Activated B cell treated with CpG ODN at 0.5 μM for 24 hours (primary cell): ENCODE measurements at regions of chr15 and their contacts with region 1.

Region 1: GRCh38 chr15:100918034-100918689 is 995 bp upstream of the LRRK1 start:
- DNase-seq: peak; percentile 81
- ATAC-seq: peak; percentile 79
- H3K4me3 Mint-ChIP-seq: peak overlapping the region; percentile 89
- H3K27ac Mint-ChIP-seq: peak overlapping the region; percentile 81
- H3K4me1 Mint-ChIP-seq: peaks cover 44% of the 10 kb centered on the region
- H3K27me3 Mint-ChIP-seq: no peaks in the 10 kb centered on the region
- CTCF ChIP-seq: peak; percentile 57

Region 2: GRCh38 chr15:100627789-100628395 is 290.3 kb before region 1 on chr15:
- CTCF ChIA-PET with region 1: interaction called, 3 read pairs
- POLR2A ChIA-PET with region 1: no interaction called
- intact Hi-C with region 1: loop called (anchors 1 kb)
- DNase-seq: no peak
- ATAC-seq: peak; percentile 79
- H3K4me3 Mint-ChIP-seq: no peak overlapping the region
- H3K27ac Mint-ChIP-seq: no peak overlapping the region
- H3K4me1 Mint-ChIP-seq: peaks cover 4% of the 10 kb centered on the region
- H3K27me3 Mint-ChIP-seq: no peaks in the 10 kb centered on the region
- CTCF ChIP-seq: peak; percentile 84

Region 3: DNA sequence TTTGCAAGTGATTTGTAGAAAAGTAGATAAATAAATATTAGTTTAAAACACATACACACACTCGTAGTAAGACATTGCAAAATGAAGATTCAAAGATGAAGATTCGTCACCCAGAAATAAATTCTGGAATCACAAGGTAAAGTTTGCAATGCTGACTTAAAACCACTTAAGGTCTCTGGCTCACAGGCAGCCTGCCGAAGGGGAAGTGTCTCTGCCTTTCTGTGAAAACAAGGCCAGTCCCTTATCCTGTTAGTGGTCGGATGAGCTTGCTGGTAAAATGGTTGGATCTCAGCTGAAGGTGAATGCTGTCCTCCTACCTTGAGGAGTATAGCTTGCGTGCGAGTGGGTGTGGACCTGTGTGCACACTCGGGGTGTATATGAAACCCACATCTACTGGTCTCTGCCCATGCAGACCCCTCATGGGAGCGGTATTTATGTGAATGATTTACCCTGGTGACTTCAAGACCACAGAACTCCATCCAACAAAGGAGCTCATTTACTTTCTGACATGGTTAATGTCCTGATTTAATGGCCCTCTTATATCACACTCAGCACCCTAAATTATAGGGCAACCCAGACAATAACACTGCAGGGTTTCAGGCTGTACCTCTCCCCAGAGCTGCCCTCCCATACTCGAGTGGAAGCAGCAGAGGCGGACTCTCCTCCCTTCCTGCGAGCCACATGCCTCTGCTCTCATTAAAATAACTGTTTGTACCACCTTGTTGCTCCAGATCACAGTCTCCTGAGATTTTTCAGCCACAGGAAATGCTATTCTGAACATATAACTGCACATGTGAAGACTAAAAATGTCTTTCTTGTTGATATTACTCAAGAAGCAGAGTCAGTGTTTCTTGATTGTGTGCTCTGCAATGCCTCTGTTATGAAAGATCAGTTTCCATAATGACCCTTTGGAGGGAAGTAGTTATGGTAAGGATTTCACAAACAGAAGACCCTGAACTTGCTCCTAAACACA is 84.5 kb before region 1 on chr15:
- CTCF ChIA-PET with region 1: no interaction called
- POLR2A ChIA-PET with region 1: no interaction called
- intact Hi-C with region 1: no loop called
- DNase-seq: no peak
- ATAC-seq: no peak
- H3K4me3 Mint-ChIP-seq: no peak overlapping the region
- H3K27ac Mint-ChIP-seq: no peak overlapping the region
- H3K4me1 Mint-ChIP-seq: no peaks in the 10 kb centered on the region
- H3K27me3 Mint-ChIP-seq: peaks cover 4% of the 10 kb centered on the region
- CTCF ChIP-seq: no peak

Region 4: DNA sequence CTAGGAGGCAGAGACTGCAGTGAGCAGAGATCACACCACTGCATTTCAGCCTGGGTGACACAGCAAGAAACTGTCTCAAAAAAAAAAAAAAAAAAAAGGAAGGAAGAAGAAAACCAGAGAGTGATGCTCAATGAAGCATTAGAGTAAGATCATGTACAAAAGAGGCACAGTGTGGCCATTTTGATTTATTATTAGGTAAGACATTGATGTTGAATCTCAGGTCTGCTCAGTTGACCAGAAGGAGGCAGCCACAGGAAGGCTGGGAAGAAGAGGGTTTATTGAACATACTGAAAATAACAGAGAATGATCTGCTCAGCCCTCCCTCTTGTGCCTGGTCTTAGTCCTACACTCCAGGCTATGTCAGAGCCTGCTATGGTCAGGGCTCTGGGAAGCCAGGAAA is 16.6 kb after region 1 on chr15:
- CTCF ChIA-PET with region 1: interaction called, 31 read pairs
- POLR2A ChIA-PET with region 1: interaction called, 6 read pairs
- intact Hi-C with region 1: loop called (anchors 1 kb)
- DNase-seq: no peak
- ATAC-seq: peak; percentile 81
- H3K4me3 Mint-ChIP-seq: peak overlapping the region; percentile 19
- H3K27ac Mint-ChIP-seq: peak overlapping the region; percentile 75
- H3K4me1 Mint-ChIP-seq: peaks cover 55% of the 10 kb centered on the region
- H3K27me3 Mint-ChIP-seq: no peaks in the 10 kb centered on the region
- CTCF ChIP-seq: no peak

Region 5: DNA sequence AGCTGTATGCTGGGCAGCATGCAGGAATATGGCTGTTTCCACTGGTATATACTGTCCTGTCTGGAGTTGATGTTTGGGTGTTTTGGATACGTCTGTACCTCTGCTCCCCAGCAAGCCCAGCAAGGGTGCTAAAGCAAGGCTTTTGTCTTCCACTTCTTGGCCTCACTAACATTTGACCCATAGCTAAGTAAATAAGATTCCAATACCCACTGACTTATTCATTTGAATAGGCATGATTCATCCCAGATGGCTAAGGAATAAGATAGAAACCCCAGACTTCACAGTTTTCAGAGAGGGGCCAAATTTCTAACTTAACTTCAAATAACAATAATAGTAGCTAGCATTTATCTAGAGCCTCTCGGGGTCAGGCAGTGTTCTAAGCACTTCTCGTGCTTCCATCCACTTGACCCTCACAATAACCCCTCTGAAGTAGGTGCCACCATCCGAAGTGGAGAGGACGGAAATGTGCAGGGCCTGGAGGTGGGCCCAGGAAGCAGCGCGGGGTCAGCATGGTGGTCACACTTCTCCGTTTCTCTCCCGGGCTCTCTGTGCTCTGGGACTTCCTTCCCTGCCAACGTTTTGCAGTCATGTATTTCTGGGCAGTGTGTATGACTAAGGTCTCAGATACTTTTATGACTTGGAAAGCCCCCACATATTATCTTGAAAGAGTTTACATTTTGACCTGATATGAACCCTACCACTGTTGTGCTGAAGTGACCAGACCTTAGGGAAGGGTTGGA is 40.3 kb after region 1 on chr15:
- CTCF ChIA-PET with region 1: no interaction called
- POLR2A ChIA-PET with region 1: interaction called, 3 read pairs
- intact Hi-C with region 1: loop called (anchors 5 kb)
- DNase-seq: no peak
- ATAC-seq: no peak
- H3K4me3 Mint-ChIP-seq: no peak overlapping the region
- H3K27ac Mint-ChIP-seq: no peak overlapping the region
- H3K4me1 Mint-ChIP-seq: peaks cover 30% of the 10 kb centered on the region
- H3K27me3 Mint-ChIP-seq: no peaks in the 10 kb centered on the region
- CTCF ChIP-seq: no peak

Region 6: DNA sequence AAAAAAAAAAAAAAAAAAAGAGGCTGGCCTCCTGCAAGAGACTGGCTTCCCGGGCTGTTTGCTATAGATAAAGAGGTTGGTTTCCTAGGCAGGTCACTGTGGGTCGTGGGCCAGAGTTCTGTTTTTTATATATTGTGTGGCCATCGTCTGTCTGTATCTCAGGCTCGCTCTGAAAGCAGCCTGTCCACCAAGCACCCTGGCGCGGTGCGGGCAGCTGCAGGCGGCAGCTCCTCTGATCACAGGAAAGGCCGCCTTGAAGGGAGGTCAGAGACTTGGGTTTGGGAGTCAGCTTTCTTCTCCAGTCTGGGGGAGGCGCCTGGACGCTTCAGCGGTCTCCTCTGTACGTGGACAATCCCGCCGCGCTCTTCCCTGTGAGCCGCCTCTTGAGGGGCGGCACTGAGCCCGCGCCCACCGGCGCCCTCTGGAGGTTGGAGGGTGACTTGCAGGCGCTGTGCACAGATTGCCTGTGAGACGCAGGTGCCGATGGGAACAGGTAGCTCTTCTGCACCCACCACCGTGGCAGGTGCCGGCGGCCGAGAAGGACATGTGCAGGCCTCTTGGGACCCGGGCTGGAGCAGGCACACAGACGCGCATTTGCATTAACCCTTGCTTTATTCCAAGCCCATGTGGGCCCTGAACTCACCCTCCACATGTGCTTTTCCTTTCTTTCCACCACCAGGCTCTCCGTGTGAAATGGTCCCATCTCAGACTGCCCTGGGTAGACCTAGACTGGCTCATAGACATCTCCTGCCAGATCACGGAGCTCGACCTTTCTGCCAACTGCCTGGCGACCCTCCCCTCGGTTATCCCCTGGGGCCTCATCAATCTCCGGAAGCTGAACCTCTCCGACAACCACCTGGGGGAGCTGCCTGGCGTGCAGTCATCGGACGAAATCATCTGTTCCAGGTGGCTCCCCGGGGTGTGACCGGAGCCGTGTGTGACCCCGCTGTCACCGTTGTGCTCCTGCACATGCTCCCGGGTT is 90.3 kb after region 1 on chr15:
- CTCF ChIA-PET with region 1: interaction called, 543 read pairs
- POLR2A ChIA-PET with region 1: interaction called, 92 read pairs
- intact Hi-C with region 1: loop called (anchors 1 kb)
- DNase-seq: peak; percentile 89
- ATAC-seq: peak; percentile 96
- H3K4me3 Mint-ChIP-seq: peak overlapping the region; percentile 85
- H3K27ac Mint-ChIP-seq: no peak overlapping the region
- H3K4me1 Mint-ChIP-seq: peaks cover 23% of the 10 kb centered on the region
- H3K27me3 Mint-ChIP-seq: no peaks in the 10 kb centered on the region
- CTCF ChIP-seq: peak; percentile 62

Region 7: DNA sequence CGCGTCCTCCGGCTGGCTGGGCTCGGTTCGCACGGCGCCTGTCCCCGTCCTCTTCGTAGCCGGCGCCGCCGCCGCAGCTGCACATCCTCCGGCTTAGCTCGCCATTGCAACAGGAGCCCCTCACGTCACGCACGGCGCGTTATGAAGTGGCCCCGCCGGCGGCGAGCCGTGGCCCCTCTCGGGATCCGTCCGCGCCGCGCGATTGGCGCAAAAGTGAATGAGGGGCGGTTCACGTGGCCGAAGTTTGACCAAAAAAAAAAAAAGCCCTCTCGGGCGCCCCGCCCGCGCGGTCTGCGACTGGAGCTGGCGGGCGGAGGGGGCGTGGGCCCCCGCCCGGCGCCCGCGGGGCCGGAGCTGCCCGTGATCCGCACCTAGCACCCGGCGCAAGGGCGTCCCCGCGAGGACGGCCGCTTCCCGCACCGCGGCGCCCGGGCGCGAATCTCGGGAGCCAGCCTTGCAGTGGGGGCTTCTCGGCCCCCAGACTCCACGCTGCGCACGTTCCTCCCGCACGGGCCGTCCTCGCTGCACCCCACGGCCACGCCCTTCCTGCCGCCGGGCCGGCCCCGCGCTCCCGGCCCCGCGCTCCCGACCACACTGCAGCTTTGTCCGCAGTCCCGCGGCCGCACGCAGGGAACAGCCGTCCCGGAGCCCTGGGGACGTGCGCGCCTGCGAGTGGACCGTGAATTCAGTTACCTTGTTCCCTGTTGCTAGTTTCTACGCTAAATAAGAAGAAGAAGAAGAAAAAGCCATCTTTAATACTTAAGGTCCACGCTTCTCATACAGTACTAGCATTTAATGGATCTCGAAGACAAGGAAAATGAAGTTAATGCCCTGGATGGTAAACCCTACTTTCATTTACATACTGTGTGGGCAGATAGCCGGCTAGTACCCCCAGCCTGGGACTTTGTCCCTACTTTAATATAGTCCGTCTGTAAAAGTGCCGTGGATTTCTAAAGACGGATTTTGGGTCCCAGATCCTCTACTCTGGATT is 334.0 kb after region 1 on chr15 and contains the start of gene CHSY1:
- CTCF ChIA-PET with region 1: no interaction called
- POLR2A ChIA-PET with region 1: interaction called, 3 read pairs
- intact Hi-C with region 1: loop called (anchors 2 kb)
- DNase-seq: peak; percentile 93
- ATAC-seq: peak; percentile 88
- H3K4me3 Mint-ChIP-seq: peak within 1 kb of the TSS; percentile 95
- H3K27ac Mint-ChIP-seq: peak within 1 kb of the TSS; percentile 92
- H3K4me1 Mint-ChIP-seq: peaks cover 43% of the 10 kb centered on the region
- H3K27me3 Mint-ChIP-seq: no peaks in the 10 kb centered on the region
- CTCF ChIP-seq: no peak
- total RNA-seq, gene CHSY1: 16.5 and 20.4 TPM in 2 replicates

Region 8: GRCh38 chr15:101652098-101652782 is 734.1 kb after region 1 on chr15 and contains the start of gene TM2D3:
- CTCF ChIA-PET with region 1: no interaction called
- POLR2A ChIA-PET with region 1: no interaction called
- intact Hi-C with region 1: loop called (anchors 2 kb)
- DNase-seq: peak; percentile 99
- ATAC-seq: peak; percentile 87
- H3K4me3 Mint-ChIP-seq: peak within 1 kb of the TSS; percentile 92
- H3K27ac Mint-ChIP-seq: peak within 1 kb of the TSS; percentile 95
- H3K4me1 Mint-ChIP-seq: peaks cover 46% of the 10 kb centered on the region
- H3K27me3 Mint-ChIP-seq: no peaks in the 10 kb centered on the region
- CTCF ChIP-seq: no peak
- total RNA-seq, gene TM2D3: 45.8 and 49.9 TPM in 2 replicates